ENCODE measurements at regions of chr1 and their contacts with region 1.

Region 1: DNA sequence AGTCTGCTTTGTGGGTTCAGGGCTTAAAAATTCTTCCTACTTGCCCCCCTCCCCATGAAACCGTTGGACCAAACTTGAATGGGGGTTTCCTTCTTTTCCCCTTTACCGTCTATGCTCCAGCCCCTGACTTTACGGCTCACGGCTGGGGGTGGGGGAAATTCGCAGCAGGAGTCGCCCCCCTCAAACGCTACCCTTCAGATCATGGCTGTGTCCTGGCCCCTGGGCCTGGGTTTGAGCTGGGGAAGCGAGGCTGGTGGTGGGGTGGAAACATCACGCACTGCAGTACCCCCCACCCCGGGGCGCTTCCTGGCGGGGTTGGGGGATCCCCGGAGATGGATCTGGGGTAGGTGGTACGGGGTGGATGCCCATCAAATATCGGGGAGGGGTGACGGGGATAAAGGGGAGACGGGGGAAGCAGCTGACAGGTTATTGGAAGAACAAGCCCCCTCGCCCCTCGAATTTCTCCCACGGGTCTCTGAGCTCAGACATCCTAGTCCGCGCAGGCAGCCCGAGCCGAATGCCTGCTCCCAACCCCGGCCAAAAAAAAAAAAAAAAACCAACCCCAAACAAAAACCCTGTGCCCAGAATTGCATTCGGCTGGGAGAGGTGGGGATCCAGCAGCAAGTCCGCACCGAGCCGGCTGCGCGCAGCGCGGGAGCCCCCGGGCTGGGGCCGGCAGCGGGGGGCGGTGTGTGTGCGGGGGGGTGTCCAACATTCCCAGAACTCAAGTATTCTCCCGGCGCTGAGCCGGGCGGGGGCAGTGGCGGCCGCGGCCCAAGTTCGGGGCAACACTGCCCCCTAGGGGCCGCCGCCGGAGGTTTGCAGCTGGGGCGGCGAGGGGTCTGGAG is 59.0 kb upstream of the ACOT11 start:
- DNase-seq: peak; percentile 83
- ATAC-seq: peak; percentile 70 to 82

Region 2: GRCh38 chr1:54077359-54077758 is 411.6 kb before region 1 on chr1:
- intact Hi-C with region 1: loop called in 1 of 2 experiments (anchors 5 kb)
- DNase-seq: no peak
- ATAC-seq: no peak

Region 3: DNA sequence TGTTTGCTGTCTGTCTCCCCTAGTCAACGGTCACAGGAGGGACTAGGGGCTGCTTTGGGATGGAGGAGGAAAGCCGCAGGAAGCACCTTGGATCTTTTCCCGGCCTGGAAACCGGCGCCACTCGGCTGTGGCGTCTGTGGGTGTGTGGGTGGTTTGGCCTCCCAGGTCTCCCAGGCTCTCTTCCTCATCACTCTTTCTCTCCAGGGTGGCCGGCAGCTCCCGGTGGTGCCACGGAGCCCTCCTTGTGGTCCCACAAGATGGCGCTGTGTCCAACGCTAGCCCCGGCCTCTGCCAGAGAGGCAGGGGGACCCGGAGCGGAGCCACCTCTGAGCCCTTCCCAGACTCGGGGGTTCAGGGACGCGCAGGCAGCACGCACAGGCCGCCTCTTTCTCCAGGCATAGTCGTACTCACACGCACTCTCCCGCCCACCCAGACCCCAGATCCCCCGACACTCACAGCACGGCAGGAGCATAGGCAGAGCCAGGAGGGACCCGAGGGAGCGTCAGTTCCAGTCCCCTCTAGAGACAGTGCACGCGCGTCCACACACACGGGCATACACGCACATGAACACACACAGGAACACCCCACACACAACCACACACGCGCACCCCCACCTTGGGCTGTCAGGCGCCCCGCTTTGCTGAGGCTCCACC is 367.4 kb before region 1 on chr1:
- intact Hi-C with region 1: loop called (anchors 1 to 5 kb)
- DNase-seq: peak; percentile 85
- ATAC-seq: peak; percentile 91 to 92

Region 4: DNA sequence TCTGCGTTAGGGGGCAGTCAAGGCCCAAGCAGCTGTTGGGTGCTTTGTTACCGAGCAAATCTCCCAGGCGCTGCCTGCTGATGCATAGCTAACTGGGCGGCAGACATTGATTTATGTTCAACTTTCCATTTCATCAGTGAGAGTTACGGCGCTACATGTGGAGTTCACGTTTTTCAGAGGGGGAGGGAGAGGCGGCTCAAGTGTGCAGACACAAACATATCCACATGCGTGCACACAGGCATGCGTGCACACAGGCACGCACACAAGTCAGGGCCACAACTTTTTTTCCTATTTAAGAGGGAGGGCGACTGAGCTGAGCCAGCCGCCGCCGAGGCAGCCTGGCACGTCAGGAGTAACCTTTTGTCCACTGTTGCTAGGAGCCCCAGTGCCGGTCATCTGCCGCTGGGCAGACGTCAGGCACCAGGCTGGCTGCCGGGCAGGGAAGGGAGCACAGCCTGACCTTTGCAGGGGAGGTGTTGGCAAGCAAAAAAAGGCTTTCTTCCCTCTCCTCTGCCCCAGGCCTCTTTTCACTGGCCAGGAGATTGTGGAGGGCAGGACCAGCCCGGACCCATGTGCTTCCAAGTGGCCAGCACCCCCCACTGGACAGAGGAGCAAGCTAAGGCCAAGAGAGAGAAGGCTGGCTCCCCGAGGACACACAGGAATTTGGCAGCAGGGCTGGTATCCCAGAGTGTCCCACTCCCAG is 215.8 kb before region 1 on chr1:
- intact Hi-C with region 1: loop called in 1 of 2 experiments (anchors 10 kb)
- DNase-seq: peak; percentile 73
- ATAC-seq: peak; percentile 67 to 78

Region 5: DNA sequence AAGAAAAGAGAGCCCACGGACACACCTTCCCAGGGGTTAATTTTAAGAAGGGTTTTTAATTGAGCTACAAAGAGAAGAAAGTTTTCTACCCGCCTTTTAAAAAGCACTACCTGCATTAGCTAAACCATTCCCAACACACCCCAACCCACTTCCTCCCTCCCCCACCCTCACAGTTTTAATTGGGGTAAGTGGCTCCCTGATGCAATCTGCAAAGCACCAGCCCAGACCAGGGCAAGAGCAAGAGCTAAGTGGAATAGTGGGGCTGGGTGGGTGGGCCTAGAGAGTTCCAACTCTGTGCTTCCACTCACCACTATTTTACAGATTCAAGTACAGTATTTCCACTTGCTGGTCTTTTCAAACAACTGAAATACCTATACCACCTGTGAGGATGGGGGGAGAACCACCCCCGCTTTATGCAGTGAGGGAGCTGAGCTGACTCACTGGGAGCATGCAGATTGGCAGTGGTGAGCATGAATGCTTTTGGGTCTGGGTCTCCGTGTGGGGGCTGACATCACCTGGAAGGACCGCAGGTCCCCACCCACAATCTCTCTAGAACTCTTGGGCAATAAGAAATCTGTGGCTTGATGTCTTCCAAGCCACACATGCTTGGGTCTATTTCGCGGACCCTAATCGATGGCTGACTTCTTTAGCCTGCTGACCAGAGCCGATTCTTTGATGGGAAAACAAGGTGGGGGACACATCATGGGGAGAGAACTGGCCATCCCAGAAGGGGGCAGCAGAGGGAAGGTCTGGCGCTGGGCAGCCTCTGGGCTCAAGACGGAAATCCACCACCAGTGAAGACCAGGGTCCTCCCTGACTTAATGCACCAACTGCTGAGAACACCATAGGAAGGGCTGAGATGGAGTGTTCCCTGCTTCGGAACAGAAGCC is 178.3 kb before region 1 on chr1:
- intact Hi-C with region 1: loop called in 1 of 2 experiments (anchors 5 kb)
- DNase-seq: peak; percentile 53
- ATAC-seq: peak; percentile 15 to 30

Region 6: GRCh38 chr1:54355931-54356679 is 132.9 kb before region 1 on chr1:
- intact Hi-C with region 1: no loop called
- DNase-seq: no peak
- ATAC-seq: no peak

Measured in left cardiac atrium (tissue), 4 donors.